K562 (cell line): ENCODE measurements at regions of chr16 and their contacts with region 1.

Region 1: GRCh38 chr16:4846891-4847773 is at the starts of genes GLYR1 and UBN1:
- DNase-seq: peak; percentile 96 to 99 (median 98)
- ATAC-seq: peak; percentile 93
- H3K4me3 ChIP-seq: peak within 1 kb of the TSS; percentile 98
- H3K27ac ChIP-seq: peak within 1 kb of the TSS; percentile 95
- H3K4me1 ChIP-seq: peaks cover 23 to 34% of the 10 kb centered on the region in 2 experiments
- H3K27me3 ChIP-seq: no peaks in the 10 kb centered on the region
- CTCF ChIP-seq: no peak
- EP300 ChIP-seq: no peak
- POLR2A ChIP-seq: peak; percentile 95
- RAD21 ChIP-seq: no peak
- polyA plus RNA-seq, gene GLYR1: 6.7 to 8.3 TPM
- polyA plus RNA-seq, gene UBN1: 1.5 to 2.4 TPM

Region 2: DNA sequence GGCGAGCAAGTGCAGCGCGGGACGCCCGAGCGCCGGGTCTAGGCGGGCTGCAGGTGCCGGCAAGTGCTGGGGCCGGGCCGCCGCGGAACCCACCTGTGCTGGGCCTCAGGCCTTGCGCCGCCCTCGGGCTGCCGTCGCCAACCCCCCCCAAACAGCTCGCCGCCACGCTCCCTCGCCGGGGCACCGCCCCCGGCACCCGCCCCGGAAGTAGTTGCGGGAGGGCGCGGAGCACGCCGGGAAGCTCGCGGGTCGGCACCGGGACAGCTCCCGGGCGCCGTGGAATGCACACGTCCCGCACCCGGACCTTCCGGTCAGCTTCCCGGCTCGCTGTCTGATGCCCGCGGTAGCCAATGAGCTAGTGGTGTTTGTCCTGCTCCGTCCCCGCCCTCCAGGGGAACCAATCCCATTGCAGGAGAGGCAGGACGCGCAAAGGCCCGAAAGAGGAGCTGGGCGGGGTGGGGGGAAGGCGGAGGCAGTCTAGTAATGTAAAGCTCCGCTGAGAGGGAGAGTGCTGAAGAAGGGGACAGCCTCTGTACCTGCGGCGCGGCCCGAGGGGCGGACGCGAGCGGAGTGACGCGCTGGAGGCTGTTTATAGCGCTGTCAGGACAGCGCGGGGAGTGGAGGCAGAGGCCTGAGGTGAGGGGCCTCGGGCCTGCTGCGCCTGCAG is 112.9 kb before region 1 on chr16 and contains the starts of genes ANKS3 and DNAAF8:
- CTCF ChIA-PET with region 1: no interaction called
- POLR2A ChIA-PET with region 1: no interaction called
- in situ Hi-C with region 1: no loop called
- intact Hi-C with region 1: loop called (anchors 5 kb)
- DNase-seq: peak; percentile 96 to 98 (median 98)
- ATAC-seq: peak; percentile 98
- H3K4me3 ChIP-seq: peak within 1 kb of the TSS; percentile 98
- H3K27ac ChIP-seq: peak within 1 kb of the TSS; percentile 71
- H3K4me1 ChIP-seq: peaks cover 0 to 22% of the 10 kb centered on the region in 2 experiments; a peak in 3 of 5 replicates
- H3K27me3 ChIP-seq: no peaks in the 10 kb centered on the region
- CTCF ChIP-seq: no peak
- EP300 ChIP-seq: no peak
- POLR2A ChIP-seq: peak; percentile 67
- RAD21 ChIP-seq: no peak
- polyA plus RNA-seq, gene ANKS3: 0.43 to 0.66 TPM
- polyA plus RNA-seq, gene DNAAF8: not detected

Region 3: DNA sequence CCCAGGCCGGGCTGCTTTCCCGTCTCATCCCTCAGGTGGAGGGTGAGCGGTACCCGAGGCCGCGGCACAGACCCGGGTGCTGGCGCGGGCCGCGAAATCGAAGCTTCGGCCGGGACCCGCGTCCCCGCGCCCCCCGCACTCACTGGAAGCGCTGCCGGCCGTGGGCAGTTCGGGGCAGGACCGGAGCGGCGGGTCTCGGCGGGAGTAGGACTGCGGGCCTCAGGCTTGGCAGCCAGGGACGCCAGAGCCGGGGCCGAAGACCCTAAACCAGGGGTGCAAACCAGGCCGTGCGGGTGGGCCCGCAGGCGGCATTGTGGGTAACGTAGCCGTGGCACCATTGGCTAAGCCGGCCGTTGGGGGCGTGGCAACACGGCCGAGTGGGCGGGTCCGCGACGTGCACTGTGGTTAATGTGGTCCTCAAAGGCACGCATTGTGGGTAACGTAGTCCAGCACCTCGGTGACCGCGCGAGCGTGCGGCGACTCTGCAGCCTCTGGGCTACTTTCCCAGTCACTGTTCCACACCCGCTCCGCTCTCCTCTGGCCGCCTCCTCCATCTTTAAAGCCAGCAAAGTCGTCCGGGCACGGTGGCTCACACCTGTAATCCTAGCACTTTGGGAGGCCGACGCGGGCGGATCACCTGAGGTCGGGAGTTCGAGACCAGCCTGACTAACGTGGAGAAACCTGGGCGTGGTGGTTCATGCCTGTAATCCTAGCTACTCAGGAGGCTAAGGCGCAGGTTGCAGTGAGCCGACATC is 80.1 kb before region 1 on chr16 and contains the start of gene ZNF500:
- CTCF ChIA-PET with region 1: no interaction called
- POLR2A ChIA-PET with region 1: no interaction called
- in situ Hi-C with region 1: no loop called
- intact Hi-C with region 1: loop called (anchors 2 kb)
- DNase-seq: peak; percentile 95 to 99 (median 96)
- ATAC-seq: peak; percentile 95
- H3K4me3 ChIP-seq: peak within 1 kb of the TSS; percentile 94
- H3K27ac ChIP-seq: peak within 1 kb of the TSS; percentile 84
- H3K4me1 ChIP-seq: peaks cover 21 to 49% of the 10 kb centered on the region in 2 experiments
- H3K27me3 ChIP-seq: no peaks in the 10 kb centered on the region
- CTCF ChIP-seq: no peak
- EP300 ChIP-seq: no peak
- POLR2A ChIP-seq: peak; percentile 85
- RAD21 ChIP-seq: no peak
- polyA plus RNA-seq, gene ZNF500: 0.80 to 0.84 TPM

Region 4: DNA sequence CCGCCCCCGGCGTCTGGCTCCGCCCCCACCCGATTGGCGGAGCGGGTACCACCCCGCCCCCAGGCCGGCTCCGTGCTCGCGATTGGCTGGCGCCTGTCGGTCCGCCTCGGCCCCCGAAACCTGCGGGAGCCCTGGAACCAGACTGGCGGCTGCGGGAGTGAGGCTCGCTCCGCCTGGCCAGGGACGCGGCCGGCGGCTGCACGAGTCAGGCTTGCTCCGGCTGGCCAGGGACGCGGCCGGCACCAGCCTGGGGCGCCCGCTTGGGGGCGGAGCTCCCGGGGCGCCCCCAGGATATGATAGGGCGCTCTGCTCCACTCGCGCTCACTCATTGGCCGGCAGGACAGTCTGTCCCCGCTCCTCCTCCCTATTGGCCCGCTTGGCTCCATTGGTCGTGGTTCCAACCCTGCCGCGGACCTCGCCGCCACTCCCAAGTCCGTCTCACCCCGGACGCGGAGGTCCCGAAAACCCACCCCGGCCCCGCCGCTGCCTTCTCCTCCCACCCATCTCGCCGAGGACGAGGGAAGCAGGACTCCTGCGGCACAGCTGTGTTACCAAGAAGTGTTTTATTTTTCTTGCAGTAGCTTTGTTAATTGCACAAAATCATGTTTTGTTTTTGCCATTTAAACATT is 44.4 kb before region 1 on chr16:
- CTCF ChIA-PET with region 1: no interaction called
- POLR2A ChIA-PET with region 1: interaction called, 4 read pairs
- in situ Hi-C with region 1: no loop called
- intact Hi-C with region 1: loop called (anchors 2 kb)
- DNase-seq: peak; percentile 94 to 98 (median 96)
- ATAC-seq: peak; percentile 96
- H3K4me3 ChIP-seq: peak overlapping the region; percentile 89
- H3K27ac ChIP-seq: peak overlapping the region; percentile 78
- H3K4me1 ChIP-seq: peaks cover 35 to 65% of the 10 kb centered on the region in 2 experiments
- H3K27me3 ChIP-seq: no peaks in the 10 kb centered on the region
- CTCF ChIP-seq: no peak
- EP300 ChIP-seq: no peak
- POLR2A ChIP-seq: peak; percentile 62
- RAD21 ChIP-seq: no peak

Region 5: DNA sequence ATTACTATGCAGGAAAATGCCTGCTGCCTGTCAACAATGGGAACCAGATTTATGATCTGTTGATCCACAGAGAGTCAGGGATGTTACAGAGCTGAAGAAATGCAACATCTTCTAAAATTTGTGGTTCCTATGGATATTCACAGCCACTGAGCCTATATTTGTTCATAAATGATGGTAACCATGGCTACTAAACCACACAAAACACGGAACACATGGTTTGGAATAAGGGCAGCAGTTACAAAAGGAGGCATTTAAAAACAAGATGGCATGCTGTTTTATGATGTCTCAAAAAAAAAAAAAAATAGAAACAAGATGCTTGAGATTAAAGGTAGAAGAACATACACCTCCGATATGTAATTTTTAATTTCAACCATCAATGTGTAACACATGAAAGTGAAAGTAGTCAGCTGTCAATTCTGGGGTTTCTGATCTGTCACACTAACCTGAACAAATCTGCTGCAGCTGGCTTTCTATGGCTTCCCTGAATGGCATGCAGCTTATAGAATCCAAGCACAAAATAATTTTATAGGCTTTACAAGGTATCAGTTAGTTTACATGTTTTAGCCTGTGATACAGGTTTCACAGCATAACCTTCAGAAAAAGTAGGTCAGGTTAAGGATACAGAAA is 13.7 kb before region 1 on chr16:
- CTCF ChIA-PET with region 1: no interaction called
- POLR2A ChIA-PET with region 1: interaction called, 11 read pairs
- in situ Hi-C with region 1: no loop called
- intact Hi-C with region 1: no loop called
- DNase-seq: no peak
- ATAC-seq: no peak
- H3K4me3 ChIP-seq: no peak overlapping the region
- H3K27ac ChIP-seq: 0 out of 3 replicates have a peak overlapping the region, but pooled peaks have one; percentile 2
- H3K4me1 ChIP-seq: peaks cover 7 to 11% of the 10 kb centered on the region in 2 experiments; a peak in 4 of 5 replicates
- H3K27me3 ChIP-seq: no peaks in the 10 kb centered on the region
- CTCF ChIP-seq: no peak
- EP300 ChIP-seq: no peak
- POLR2A ChIP-seq: no peak
- RAD21 ChIP-seq: no peak

Region 6: DNA sequence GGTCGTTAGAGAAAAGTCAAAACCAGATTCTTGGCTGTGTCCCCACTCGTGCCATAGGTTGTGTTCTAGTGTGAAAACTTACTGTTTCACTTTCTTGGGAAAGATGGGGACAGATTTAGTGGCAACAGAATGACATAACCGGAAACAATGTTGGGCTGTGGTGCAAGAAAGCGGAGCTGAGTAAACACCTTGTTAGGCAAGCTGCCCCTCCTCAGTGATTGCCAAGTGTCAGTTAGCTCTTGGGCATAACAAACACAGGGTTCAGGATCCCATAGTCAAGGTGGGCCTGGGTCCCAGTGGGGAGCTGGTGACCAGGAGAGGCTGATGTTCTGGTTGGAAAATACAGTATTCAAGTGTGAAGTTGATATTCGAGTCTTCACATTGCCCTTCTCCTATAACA is 15.5 kb after region 1 on chr16:
- CTCF ChIA-PET with region 1: no interaction called
- POLR2A ChIA-PET with region 1: interaction called, 20 read pairs
- in situ Hi-C with region 1: no loop called
- intact Hi-C with region 1: no loop called
- DNase-seq: no peak
- ATAC-seq: no peak
- H3K4me3 ChIP-seq: no peak overlapping the region
- H3K27ac ChIP-seq: no peak overlapping the region
- H3K4me1 ChIP-seq: no peaks in the 10 kb centered on the region
- H3K27me3 ChIP-seq: no peaks in the 10 kb centered on the region
- CTCF ChIP-seq: no peak
- EP300 ChIP-seq: no peak
- POLR2A ChIP-seq: no peak
- RAD21 ChIP-seq: no peak